ENCODE measurements at regions of chr5 and their contacts with region 1.

Region 1: DNA sequence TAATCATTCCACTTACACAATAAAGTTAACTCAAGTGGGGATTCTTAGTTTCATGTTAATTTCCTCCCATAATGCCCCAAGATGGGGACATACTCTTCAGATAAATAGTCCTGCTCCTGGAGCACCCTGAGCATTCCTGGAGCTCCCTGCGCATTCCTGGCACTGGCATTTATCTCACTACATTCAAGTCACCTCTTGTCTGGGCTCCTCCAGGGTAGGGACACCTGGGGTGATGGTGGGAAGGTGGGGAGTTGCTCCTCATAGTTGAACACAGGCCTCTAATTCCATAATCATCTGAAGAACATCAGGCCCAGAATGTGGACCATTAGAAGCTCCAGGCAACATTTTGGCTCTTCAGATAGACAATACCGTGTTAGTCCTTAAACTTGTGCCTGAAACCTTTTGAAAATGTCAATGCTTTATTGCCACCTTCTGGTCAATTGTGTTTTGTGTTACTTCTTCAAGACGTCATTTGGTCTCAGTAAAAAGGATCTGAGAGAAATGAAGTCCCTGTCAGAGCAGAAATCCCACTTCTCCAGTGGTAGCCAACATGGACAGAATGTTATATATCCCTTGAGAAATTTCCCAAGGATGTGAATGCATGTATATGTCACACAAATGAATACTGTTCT is 14.2 kb upstream of the AGGF1 start:
- DNase-seq: peak; percentile 23
- H3K4me3 ChIP-seq: no peak overlapping the region
- H3K27ac ChIP-seq: no peak overlapping the region
- H3K27me3 ChIP-seq: peaks cover 2% of the 10 kb centered on the region
- CTCF ChIP-seq: peak; percentile 47

Region 2: DNA sequence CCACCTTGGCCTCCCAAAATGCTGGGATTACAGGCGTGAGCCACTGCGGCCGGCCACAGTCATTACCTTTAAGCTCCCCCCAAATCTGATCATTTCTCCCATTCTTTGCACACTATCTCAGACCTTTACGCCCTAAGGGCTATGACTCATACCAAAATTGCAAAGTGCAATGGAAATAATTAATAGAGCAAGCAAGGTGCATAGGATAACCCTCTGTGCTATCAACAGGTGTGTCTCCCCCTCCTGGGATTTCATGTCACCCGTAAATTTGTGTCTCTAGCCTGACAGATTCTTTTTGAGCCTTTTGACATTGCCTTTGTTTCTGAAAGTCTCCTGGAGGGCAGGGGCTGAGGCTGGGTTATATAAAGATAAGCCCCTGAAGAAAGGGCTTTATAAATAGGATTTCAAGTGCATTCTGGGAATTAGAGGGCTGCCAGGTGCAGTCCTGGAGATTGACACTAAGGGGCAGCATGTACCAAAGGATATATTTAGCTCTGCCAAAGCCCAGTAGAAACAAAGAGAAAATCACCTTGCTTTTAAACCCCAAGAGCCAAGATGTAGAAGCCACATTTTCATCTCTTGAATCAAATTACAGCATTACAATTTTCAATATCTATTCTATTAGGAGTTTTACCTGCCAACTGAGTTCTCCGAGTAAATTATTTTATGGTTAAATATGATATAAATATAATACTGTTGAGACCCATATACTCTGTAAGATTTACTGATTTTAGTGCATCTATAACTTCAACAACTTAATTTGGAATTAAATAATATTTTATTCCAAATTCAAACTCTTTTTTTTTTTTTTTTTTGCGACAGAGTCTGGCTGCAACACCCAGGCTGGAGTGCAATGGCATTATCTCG is 148.0 kb before region 1 on chr5:
- CTCF ChIA-PET with region 1: interaction called, 46 read pairs
- POLR2A ChIA-PET with region 1: no interaction called
- DNase-seq: peak; percentile 47
- H3K4me3 ChIP-seq: no peak overlapping the region
- H3K27ac ChIP-seq: no peak overlapping the region
- H3K27me3 ChIP-seq: no peaks in the 10 kb centered on the region
- CTCF ChIP-seq: peak; percentile 87